Activated CD8-positive, alpha-beta T cell treated with anti-CD3 and anti-CD28 coated beads, Interleukin-2, amount 10 ng/mL, durations not matched to agents 7 days and 5 days (primary cell): ENCODE measurements at regions of chr2 and their contacts with region 1.

Region 1: DNA sequence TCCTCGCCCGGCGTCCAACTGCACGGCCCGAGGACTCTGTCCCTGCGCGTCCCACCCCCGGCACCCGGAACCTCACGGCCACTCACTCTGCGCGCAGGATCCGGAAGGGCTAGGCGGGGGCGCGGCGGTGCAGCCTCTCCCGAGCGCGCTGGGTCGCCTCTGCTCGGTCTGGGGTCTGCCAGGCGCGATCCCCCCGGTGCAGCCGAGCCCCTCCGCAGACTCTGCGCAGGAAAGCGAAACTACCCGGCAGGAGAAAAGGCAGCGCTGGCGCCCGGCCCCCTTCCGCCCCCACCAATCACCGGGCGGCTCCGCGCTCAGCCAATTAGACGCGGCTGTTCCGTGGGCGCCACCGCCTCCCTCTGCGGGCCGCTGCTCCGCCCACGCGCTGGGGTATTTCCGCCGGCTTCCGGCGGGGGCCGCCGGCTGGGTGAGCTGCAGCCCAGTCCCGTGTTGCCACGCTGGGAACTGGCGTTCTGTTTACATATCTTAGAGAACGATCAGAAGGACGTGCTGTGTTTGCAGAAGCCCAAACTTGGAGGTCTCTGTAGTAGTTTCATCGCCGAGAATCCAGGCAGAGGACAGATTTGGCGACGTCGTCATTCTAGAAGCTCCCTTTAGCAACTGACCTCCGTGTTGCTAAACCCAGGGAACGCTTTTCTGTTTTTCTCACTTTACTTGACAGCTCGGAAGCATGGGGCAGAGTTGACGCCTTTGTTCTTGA is at the start of gene STAT1:
- DNase-seq: peak; percentile 96
- ATAC-seq: peak; percentile 85
- H3K4me3 Mint-ChIP-seq: no peak within 1 kb of the TSS
- H3K27ac Mint-ChIP-seq: no peak within 1 kb of the TSS
- H3K4me1 Mint-ChIP-seq: peaks cover 38% of the 10 kb centered on the region
- H3K27me3 Mint-ChIP-seq: no peaks in the 10 kb centered on the region
- total RNA-seq, gene STAT1: 472 to 473 TPM

Region 2: GRCh38 chr2:190880378-190881073 is 133.6 kb before region 1 on chr2 and contains the start of gene GLS:
- CTCF ChIA-PET with region 1: no interaction called
- POLR2A ChIA-PET with region 1: interaction called, 51 read pairs
- DNase-seq: peak; percentile 98
- ATAC-seq: peak; percentile 81
- H3K4me3 Mint-ChIP-seq: peak within 1 kb of the TSS; percentile 94
- H3K27ac Mint-ChIP-seq: peak within 1 kb of the TSS; percentile 99
- H3K4me1 Mint-ChIP-seq: peaks cover 36% of the 10 kb centered on the region
- H3K27me3 Mint-ChIP-seq: no peaks in the 10 kb centered on the region
- total RNA-seq, gene GLS: 162 to 193 TPM

Region 3: GRCh38 chr2:190986221-190986953 is 27.7 kb before region 1 on chr2:
- CTCF ChIA-PET with region 1: interaction called, 8 read pairs
- POLR2A ChIA-PET with region 1: interaction called, 10 read pairs
- DNase-seq: no peak
- ATAC-seq: no peak
- H3K4me3 Mint-ChIP-seq: no peak overlapping the region
- H3K27ac Mint-ChIP-seq: peak overlapping the region; percentile 53
- H3K4me1 Mint-ChIP-seq: peaks cover 69% of the 10 kb centered on the region
- H3K27me3 Mint-ChIP-seq: no peaks in the 10 kb centered on the region

Region 4: GRCh38 chr2:190996338-190996946 is 17.6 kb before region 1 on chr2:
- CTCF ChIA-PET with region 1: interaction called, 5 read pairs
- POLR2A ChIA-PET with region 1: interaction called, 49 read pairs
- DNase-seq: peak; percentile 57
- ATAC-seq: peak; percentile 72
- H3K4me3 Mint-ChIP-seq: no peak overlapping the region
- H3K27ac Mint-ChIP-seq: peak overlapping the region; percentile 65
- H3K4me1 Mint-ChIP-seq: peaks cover 72% of the 10 kb centered on the region
- H3K27me3 Mint-ChIP-seq: no peaks in the 10 kb centered on the region

Region 5: DNA sequence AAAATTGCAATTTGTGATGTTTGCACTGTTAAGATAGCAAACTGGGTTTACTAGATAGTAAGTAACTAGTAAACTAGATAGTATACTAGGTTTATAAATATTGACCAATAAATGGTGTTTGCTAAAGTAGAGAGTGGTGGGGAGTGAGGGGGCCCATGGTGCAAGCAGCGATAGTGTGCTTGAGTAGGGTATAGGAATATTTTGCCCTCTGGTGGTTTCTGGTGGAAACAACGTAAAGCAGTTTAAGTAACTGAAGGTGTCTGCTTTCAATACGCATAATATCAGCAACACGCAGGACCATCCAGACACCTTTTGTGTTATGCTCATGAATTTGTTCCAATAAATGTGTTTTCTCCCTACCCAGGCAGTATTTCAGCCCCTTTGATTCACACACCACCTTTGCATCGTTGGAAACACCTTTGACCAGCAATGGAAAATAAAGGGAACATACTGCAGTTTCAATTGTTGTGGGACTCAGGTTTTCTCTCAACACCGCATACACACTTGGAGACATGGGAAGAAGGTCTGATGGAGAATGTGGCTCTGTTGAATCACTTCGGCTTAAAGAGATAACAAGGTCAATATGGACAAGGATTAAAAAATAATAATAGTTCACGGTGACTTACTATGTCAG is 16.5 kb after region 1 on chr2:
- CTCF ChIA-PET with region 1: interaction called, 16 read pairs
- POLR2A ChIA-PET with region 1: interaction called, 295 read pairs
- DNase-seq: peak; percentile 69
- ATAC-seq: peak; percentile 87
- H3K4me3 Mint-ChIP-seq: no peak overlapping the region
- H3K27ac Mint-ChIP-seq: peak overlapping the region; percentile 20
- H3K4me1 Mint-ChIP-seq: peaks cover 60% of the 10 kb centered on the region
- H3K27me3 Mint-ChIP-seq: no peaks in the 10 kb centered on the region

Region 6: GRCh38 chr2:191038241-191038725 is 24.2 kb after region 1 on chr2:
- CTCF ChIA-PET with region 1: interaction called, 3 read pairs
- POLR2A ChIA-PET with region 1: interaction called, 12 read pairs
- DNase-seq: peak; percentile 58
- ATAC-seq: peak; percentile 79
- H3K4me3 Mint-ChIP-seq: no peak overlapping the region
- H3K27ac Mint-ChIP-seq: peak overlapping the region; percentile 75
- H3K4me1 Mint-ChIP-seq: peaks cover 34% of the 10 kb centered on the region
- H3K27me3 Mint-ChIP-seq: no peaks in the 10 kb centered on the region

Region 7: DNA sequence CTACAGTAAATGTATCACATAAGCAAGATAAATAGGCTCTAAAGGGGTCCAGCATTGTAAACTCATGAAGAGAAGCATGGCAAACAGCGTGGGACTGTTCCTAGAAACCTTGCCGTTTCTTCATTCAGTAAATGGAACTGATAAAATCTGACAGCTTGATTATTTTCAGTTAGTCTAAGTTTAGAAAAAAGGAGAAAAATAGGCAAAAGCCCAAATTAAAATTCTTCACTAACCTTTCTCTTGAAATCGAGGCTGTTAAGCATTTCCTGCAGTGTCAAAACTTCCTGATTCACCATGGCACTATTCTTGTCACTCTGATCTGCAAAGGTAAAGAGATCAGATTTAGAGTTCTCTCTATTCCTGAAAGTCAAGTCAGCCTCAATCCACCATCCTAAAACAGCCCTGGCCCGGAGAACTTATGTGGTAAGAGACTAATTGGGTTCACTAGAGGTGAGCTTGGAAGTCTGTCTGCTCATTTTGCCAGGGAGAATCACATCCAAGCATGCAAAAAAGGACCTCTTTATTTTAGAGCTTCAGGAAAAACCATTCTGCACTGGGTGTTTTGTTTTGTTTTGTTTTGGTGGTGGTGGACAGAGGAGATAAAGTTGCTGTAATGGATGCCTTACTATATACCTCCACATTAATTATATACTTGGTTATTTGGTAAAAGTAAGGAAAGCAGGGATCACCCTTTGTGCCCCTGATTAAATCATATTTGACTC is 52.3 kb after region 1 on chr2:
- CTCF ChIA-PET with region 1: no interaction called
- POLR2A ChIA-PET with region 1: interaction called, 67 read pairs
- DNase-seq: peak; percentile 41
- ATAC-seq: peak; percentile 37
- H3K4me3 Mint-ChIP-seq: peak overlapping the region; percentile 72
- H3K27ac Mint-ChIP-seq: peak overlapping the region; percentile 85
- H3K4me1 Mint-ChIP-seq: peaks cover 70% of the 10 kb centered on the region
- H3K27me3 Mint-ChIP-seq: no peaks in the 10 kb centered on the region

Region 8: DNA sequence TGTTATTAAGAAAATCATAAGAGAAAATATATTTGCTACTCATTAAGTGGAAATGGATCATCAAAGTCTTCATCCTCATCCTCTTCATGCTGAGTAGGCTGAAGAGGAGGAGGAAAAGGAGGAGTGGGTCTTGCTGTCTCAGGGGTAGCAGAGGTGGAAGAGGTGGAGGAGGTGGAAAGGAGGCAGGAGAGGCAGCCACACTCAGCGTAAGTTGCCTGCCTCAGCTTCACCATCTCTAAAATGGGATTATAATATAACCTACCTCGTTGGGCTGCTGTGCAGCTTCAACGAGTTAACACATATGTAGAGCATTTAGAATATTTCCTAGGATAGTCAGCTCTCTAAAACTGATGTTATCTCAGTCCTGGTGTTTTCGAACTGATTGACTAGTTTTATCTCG is 226.8 kb after region 1 on chr2:
- CTCF ChIA-PET with region 1: no interaction called
- POLR2A ChIA-PET with region 1: no interaction called
- DNase-seq: no peak
- ATAC-seq: no peak
- H3K4me3 Mint-ChIP-seq: no peak overlapping the region
- H3K27ac Mint-ChIP-seq: no peak overlapping the region
- H3K4me1 Mint-ChIP-seq: peaks cover 3% of the 10 kb centered on the region
- H3K27me3 Mint-ChIP-seq: peaks cover 8% of the 10 kb centered on the region